ENCODE measurements at regions of chr1 and their contacts with region 1.

Region 1: DNA sequence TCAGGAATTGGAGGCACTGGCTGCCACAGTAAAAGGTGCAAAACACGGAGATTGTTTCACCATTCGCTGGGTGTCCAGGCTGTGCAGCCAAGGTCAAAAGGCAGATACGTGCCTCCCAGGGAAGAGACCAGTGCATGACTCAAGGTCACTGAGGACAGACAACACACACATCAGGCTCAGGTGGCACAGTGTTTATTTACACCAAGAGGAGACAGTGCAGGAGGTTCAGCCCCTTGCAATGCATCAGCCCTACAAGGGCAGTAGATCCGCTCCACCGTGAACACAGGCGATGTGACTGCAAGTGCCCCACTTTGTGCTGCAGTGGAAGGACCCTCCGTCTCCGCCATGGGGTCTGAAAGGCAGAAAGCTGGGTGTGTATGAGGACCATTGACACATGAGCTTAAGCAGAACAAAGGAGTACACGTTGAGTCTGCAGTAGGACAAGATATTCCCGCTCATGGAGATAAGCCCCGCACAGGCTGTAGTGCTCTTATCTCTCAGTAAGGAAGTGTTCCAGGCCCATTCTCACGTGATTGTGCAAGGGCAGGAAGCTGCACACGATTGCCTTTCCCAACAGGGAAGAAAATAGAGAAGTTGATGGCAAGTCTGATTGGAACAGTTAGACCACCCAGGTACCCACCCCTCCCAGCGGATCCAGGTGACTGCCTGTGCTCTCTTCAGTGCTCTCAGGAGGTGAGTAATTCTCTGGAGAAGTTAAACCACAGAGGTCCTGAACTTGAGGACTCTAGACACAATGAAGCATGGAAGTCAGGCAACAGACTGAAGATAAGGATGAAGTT is 37.5 kb upstream of the QSOX1 start:
- DNase-seq: no peak

Region 2: DNA sequence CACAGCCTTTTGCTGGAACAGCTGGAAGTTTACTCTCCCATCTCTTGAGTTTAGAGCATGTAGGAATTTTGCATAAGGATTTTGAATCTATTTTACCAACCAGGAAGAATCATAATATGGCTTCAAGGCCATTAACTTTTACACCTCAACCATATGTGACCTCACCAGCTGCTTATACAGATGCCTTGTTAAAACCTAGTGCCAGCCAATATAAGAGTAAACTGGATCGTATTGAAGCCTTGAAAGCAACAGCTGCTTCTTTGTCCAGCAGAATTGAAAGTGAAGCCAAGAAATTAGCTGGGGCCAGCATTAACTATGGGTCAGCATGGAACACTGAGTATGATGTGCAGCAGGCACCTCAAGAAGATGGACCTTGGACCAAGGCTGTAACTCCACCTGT is 97.1 kb before region 1 on chr1:
- intact Hi-C with region 1: no loop called
- DNase-seq: no peak

Region 3: DNA sequence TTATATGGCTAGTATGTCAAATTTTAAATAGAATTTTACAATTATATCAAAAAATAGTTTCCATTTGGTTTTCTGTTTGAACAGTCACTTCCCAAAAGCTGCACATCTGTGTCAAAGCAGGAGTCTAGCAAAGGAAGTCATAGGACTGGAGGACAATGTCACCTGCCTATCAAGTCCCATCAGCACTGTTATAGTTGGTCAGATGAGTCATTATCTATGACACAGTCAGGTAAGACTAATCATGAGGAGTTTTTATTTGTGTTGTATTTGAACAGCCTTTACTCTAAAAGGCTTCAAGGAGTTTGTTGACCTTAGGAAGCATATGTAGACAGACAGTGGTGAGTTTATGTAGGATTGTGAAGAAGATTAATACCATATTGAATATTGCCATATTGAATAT is 36.7 kb before region 1 on chr1:
- intact Hi-C with region 1: no loop called
- DNase-seq: no peak

Region 4: DNA sequence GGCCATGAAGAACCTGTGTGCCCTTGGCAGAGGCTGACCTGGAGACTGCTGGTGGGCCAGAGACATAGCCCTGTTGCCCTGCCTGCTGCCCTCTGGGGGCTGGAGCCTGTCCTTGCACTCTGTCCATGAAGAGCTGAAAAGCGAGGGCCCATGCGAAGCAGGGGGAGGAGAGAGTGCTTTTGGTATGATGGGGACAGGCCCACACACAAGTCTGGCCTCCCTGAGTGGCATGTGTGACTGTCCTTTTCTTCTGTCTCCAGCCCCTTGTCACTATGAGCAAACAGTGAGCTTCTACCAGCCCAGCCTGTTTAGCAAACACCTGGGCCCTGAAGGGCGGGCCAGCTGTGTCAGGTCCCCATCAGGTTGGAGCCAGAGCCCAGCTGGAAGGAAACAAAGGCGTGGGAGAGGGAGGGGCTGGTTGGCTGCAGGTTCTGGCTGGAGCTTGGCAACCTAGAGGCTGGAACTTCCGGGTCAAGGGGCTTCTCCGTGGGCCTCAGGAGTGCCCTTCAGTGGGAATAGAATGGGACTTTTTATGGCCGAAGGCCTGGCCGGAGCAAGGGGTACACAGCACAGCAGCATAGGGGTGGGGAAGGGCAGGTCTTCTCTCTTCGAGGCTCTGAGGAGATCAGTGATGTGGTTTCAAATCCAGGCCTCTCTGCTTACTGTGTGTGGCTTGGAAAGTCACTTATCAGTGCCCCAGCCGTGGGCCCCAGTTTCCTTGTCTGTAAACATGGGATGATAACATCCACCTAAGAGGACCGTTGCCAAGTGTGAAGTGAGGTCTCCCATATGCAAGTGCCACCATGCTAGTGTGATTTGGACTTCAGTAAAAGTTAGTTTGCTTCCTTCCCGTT is 51.8 kb after region 1 on chr1:
- intact Hi-C with region 1: loop called (anchors 5 kb)
- DNase-seq: peak; percentile 77